ENCODE measurements at regions of chr1 and their contacts with region 1.

Region 1: DNA sequence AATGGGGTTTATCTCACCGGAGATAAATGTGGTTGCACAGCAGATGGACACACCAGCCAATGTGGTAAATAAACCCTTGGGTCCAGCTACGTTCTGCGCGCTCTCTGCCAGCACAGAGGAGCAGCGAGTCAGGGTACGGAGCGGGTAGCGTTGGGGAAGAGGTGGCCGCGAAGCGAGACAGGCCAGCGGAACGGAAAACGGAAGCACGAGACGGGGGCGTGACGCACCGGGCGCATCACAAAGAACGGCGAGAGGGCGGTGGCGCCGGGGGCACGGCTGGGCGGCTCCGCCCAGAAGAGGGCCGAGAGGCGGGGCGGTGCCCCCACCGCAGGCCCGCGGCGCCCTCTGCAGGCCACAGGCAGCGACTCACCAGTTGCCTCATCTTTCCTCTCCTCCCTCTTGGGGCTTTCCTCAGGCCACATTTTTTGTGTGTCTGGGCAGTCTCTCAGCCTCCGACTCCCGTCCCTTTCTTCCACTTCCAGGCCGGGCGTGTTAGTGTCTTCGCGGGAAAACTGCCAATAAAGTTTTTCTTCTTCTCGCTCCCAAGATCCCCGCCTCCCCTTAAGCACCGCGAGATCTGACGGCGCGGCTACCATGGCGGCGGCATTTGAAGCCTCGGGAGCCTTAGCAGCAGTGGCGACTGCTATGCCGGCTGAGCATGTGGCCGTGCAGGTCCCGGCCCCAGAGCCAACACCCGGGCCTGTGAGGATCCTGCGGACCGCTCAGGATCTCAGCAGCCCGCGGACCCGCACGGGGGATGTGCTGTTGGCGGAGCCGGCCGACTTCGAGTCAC is at the start of gene DDX20:
- DNase-seq: peak; percentile 86 to 97 (median 93)
- ATAC-seq: peak; percentile 89
- H3K4me3 ChIP-seq: peak within 1 kb of the TSS; percentile 75 to 89
- H3K4me3 Mint-ChIP-seq: peak within 1 kb of the TSS; percentile 90
- H3K27ac ChIP-seq: peak within 1 kb of the TSS; percentile 93 to 96
- H3K27ac Mint-ChIP-seq: peak within 1 kb of the TSS; percentile 98
- H3K4me1 ChIP-seq: peaks cover 19% of the 10 kb centered on the region
- H3K4me1 Mint-ChIP-seq: peaks cover 43% of the 10 kb centered on the region
- H3K27me3 ChIP-seq: no peaks in the 10 kb centered on the region
- H3K27me3 Mint-ChIP-seq: no peaks in the 10 kb centered on the region
- CTCF ChIP-seq: peak; percentile 83
- total RNA-seq, gene DDX20: 35.4 to 35.9 TPM

Region 2: GRCh38 chr1:110477041-110477440 is 1278.5 kb before region 1 on chr1:
- CTCF ChIA-PET with region 1: no interaction called
- POLR2A ChIA-PET with region 1: no interaction called
- intact Hi-C with region 1: no loop called
- DNase-seq: no peak
- ATAC-seq: no peak
- H3K4me3 ChIP-seq: no peak overlapping the region
- H3K4me3 Mint-ChIP-seq: no peak overlapping the region
- H3K27ac ChIP-seq: no peak overlapping the region
- H3K27ac Mint-ChIP-seq: no peak overlapping the region
- H3K4me1 ChIP-seq: no peaks in the 10 kb centered on the region
- H3K4me1 Mint-ChIP-seq: no peaks in the 10 kb centered on the region
- H3K27me3 ChIP-seq: no peaks in the 10 kb centered on the region
- H3K27me3 Mint-ChIP-seq: peaks cover 5% of the 10 kb centered on the region
- CTCF ChIP-seq: no peak

Region 3: GRCh38 chr1:110879758-110880606 is 875.5 kb before region 1 on chr1:
- CTCF ChIA-PET with region 1: no interaction called
- POLR2A ChIA-PET with region 1: no interaction called
- intact Hi-C with region 1: loop called in 1 of 2 experiments (anchors 10 kb)
- DNase-seq: peak in 7 of 9 experiments; percentile 38 to 86 (median 62)
- ATAC-seq: peak; percentile 51
- H3K4me3 ChIP-seq: peak overlapping the region; percentile 0 to 25
- H3K4me3 Mint-ChIP-seq: peak overlapping the region; percentile 80
- H3K27ac ChIP-seq: peak overlapping the region; percentile 8 to 90
- H3K27ac Mint-ChIP-seq: peak overlapping the region; percentile 99
- H3K4me1 ChIP-seq: peaks cover 82% of the 10 kb centered on the region
- H3K4me1 Mint-ChIP-seq: peaks cover 84% of the 10 kb centered on the region
- H3K27me3 ChIP-seq: no peaks in the 10 kb centered on the region
- H3K27me3 Mint-ChIP-seq: no peaks in the 10 kb centered on the region
- CTCF ChIP-seq: no peak

Region 4: DNA sequence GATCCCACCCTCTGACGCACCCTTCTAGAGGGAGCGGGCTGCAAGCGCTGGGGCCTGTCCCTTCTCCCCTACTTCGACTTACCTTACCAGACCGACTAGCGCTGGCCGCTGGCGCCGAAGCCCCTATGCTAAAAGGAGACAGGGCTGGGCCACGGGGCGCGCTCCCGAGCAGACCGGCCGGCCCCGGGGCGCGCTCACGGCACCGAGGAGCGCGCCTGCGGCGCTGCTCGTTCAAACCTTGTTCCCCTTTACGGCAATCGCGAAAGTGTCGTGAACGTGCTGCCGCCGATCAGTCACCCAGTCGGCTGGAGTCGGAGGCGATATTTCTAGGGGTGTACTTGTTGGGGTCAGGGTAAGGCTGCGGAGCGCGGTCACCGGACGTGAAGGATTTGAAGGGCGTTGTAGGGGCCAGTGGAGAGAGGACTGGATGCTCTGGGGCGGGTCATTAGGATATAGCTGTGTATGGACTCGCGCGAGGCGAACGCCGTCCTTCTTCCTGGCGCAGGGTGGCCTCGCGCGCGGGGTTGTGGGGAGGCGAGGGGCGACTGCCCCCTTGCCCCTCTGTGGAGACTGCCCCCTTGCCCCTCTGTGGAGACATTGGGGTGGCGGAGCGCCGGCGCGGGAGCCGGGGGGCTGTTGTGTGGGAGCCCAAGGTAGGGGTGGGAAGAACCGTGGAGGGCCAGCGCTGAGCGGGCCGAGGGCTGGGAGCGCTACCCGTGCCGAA is 615.4 kb before region 1 on chr1 and contains the starts of genes CEPT1 and DRAM2:
- CTCF ChIA-PET with region 1: no interaction called
- POLR2A ChIA-PET with region 1: no interaction called
- intact Hi-C with region 1: loop called in 1 of 2 experiments (anchors 1 kb)
- DNase-seq: peak; percentile 86 to 96 (median 92)
- ATAC-seq: peak; percentile 74
- H3K4me3 ChIP-seq: peak within 1 kb of the TSS; percentile 89 to 97
- H3K4me3 Mint-ChIP-seq: peak within 1 kb of the TSS; percentile 100
- H3K27ac ChIP-seq: peak within 1 kb of the TSS; percentile 85 to 88
- H3K27ac Mint-ChIP-seq: peak within 1 kb of the TSS; percentile 100
- H3K4me1 ChIP-seq: peaks cover 51% of the 10 kb centered on the region
- H3K4me1 Mint-ChIP-seq: peaks cover 57% of the 10 kb centered on the region
- H3K27me3 ChIP-seq: no peaks in the 10 kb centered on the region
- H3K27me3 Mint-ChIP-seq: no peaks in the 10 kb centered on the region
- CTCF ChIP-seq: no peak
- total RNA-seq, gene CEPT1: 21.5 to 22.9 TPM
- total RNA-seq, gene DRAM2: 25.5 to 27.1 TPM

Region 5: DNA sequence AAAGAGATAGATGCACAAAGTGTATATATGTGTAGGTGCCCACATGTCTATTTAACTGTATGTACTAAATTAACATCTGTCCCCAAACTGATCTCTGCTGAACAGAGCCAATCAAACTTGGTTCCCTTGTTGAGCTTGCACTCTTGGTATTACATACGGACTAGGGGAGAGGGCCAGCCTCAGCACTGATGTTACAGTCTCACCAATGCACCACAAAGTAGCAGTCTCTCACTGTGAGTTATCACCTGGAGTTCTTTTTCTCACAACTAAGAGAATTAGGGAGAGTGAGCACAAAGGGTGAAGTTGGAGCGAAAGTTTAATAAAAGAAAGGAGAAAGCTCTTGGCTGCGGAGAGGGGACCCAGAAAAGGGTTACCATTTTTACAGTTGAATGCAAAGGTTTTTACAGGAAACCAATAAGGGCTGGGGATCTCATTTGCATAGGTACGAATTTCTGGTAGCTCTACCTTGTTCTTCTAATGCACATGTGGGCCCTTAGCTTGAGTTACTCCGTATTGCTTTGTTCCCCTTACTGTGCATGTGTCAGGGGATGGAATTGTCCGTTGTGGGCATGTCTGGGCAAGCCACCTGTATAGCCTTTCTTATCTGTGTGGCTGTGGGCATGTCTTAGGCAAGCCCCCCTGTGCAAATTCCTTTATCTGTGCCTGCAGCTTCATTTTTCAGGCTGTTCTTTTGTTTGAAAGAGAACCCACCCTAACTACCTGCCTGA is 541.3 kb before region 1 on chr1:
- CTCF ChIA-PET with region 1: no interaction called
- POLR2A ChIA-PET with region 1: no interaction called
- intact Hi-C with region 1: loop called in 1 of 2 experiments (anchors 1 kb)
- DNase-seq: no peak
- ATAC-seq: no peak
- H3K4me3 ChIP-seq: peak overlapping the region in 1 of 2 experiments; percentile 26
- H3K4me3 Mint-ChIP-seq: peak overlapping the region; percentile 72
- H3K27ac ChIP-seq: peak overlapping the region; percentile 65 to 84
- H3K27ac Mint-ChIP-seq: peak overlapping the region; percentile 94
- H3K4me1 ChIP-seq: peaks cover 65% of the 10 kb centered on the region
- H3K4me1 Mint-ChIP-seq: peaks cover 90% of the 10 kb centered on the region
- H3K27me3 ChIP-seq: no peaks in the 10 kb centered on the region
- H3K27me3 Mint-ChIP-seq: no peaks in the 10 kb centered on the region
- CTCF ChIP-seq: no peak

Region 6: GRCh38 chr1:111481387-111482221 is 273.9 kb before region 1 on chr1:
- CTCF ChIA-PET with region 1: interaction called, 12 read pairs
- POLR2A ChIA-PET with region 1: interaction called, 4 read pairs
- intact Hi-C with region 1: loop called (anchors 10 kb)
- DNase-seq: peak in 8 of 9 experiments; percentile 46 to 78 (median 56)
- ATAC-seq: peak; percentile 41
- H3K4me3 ChIP-seq: no peak overlapping the region
- H3K4me3 Mint-ChIP-seq: no peak overlapping the region
- H3K27ac ChIP-seq: no peak overlapping the region
- H3K27ac Mint-ChIP-seq: no peak overlapping the region
- H3K4me1 ChIP-seq: peaks cover 22% of the 10 kb centered on the region
- H3K4me1 Mint-ChIP-seq: peaks cover 40% of the 10 kb centered on the region
- H3K27me3 ChIP-seq: no peaks in the 10 kb centered on the region
- H3K27me3 Mint-ChIP-seq: no peaks in the 10 kb centered on the region
- CTCF ChIP-seq: no peak

Region 7: DNA sequence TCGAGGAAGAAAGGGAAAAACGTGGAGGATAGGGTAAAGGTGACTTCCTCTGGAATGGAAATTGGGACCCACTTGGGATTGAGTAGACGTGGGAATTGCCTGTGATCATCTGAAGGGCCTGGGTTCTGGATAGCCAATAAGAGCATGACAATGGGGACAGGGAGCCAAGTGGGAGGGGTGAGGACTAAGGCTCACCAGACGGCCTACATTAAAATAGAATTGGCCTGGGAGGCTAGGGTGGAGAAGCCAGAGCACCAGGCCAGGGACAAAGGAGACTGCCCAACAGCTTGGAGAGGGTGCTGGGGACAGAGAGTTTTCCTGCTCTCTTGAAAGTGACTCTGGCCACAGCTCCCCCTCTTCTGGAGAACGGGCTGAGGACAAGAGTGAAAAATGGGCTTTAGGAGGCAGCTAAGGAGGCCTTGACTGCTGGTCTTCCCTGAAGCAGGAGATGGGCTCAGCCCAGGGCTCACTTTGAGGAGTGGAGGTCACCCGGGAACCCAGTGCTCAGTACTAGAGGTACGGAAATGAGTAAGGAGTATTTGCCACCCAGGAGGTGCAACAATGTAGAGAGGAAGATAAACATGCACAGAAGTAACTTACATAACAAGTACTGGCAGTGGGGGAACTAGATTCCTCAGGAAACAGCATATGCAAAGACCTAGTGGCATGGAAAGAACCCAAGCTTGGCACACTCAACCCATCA is 35.1 kb before region 1 on chr1:
- CTCF ChIA-PET with region 1: interaction called, 15 read pairs
- POLR2A ChIA-PET with region 1: no interaction called
- intact Hi-C with region 1: loop called (anchors 1 kb)
- DNase-seq: no peak
- ATAC-seq: no peak
- H3K4me3 ChIP-seq: no peak overlapping the region
- H3K4me3 Mint-ChIP-seq: no peak overlapping the region
- H3K27ac ChIP-seq: no peak overlapping the region
- H3K27ac Mint-ChIP-seq: no peak overlapping the region
- H3K4me1 ChIP-seq: no peaks in the 10 kb centered on the region
- H3K4me1 Mint-ChIP-seq: peaks cover 15% of the 10 kb centered on the region
- H3K27me3 ChIP-seq: no peaks in the 10 kb centered on the region
- H3K27me3 Mint-ChIP-seq: no peaks in the 10 kb centered on the region
- CTCF ChIP-seq: no peak

Region 8: GRCh38 chr1:111769517-111770146 is 14.1 kb after region 1 on chr1:
- CTCF ChIA-PET with region 1: interaction called, 17 read pairs
- POLR2A ChIA-PET with region 1: no interaction called
- intact Hi-C with region 1: no loop called
- DNase-seq: peak; percentile 7 to 82 (median 57)
- ATAC-seq: peak; percentile 72
- H3K4me3 ChIP-seq: no peak overlapping the region
- H3K4me3 Mint-ChIP-seq: no peak overlapping the region
- H3K27ac ChIP-seq: no peak overlapping the region
- H3K27ac Mint-ChIP-seq: no peak overlapping the region
- H3K4me1 ChIP-seq: no peaks in the 10 kb centered on the region
- H3K4me1 Mint-ChIP-seq: peaks cover 7% of the 10 kb centered on the region
- H3K27me3 ChIP-seq: no peaks in the 10 kb centered on the region
- H3K27me3 Mint-ChIP-seq: no peaks in the 10 kb centered on the region
- CTCF ChIP-seq: peak; percentile 94

Measured in CD8-positive, alpha-beta T cell (primary cell).